Ascending aorta (tissue), 2 donors: ENCODE measurements at regions of chr3 and their contacts with region 1.

Region 1: GRCh38 chr3:112642912-112643506 is 2.1 kb upstream of the CCDC80 start:
- DNase-seq: peak; percentile 61 to 95
- H3K4me3 ChIP-seq: peak overlapping the region in 1 of 2 donors; percentile 21
- H3K27ac ChIP-seq: peak overlapping the region in 1 of 2 donors; percentile 83
- H3K4me1 ChIP-seq: peaks cover 3 to 15% of the 10 kb centered on the region in 2 donors
- H3K27me3 ChIP-seq: no peaks in the 10 kb centered on the region
- CTCF ChIP-seq: peak; percentile 83 to 90 (median 84)

Region 2: GRCh38 chr3:112338021-112338726 is 304.8 kb before region 1 on chr3:
- intact Hi-C with region 1: no loop called
- DNase-seq: no peak
- H3K4me3 ChIP-seq: peak overlapping the region in 1 of 2 donors; percentile 19
- H3K27ac ChIP-seq: peak overlapping the region; percentile 95
- H3K4me1 ChIP-seq: peaks cover 0 to 18% of the 10 kb centered on the region in 2 donors
- H3K27me3 ChIP-seq: no peaks in the 10 kb centered on the region
- CTCF ChIP-seq: no peak

Region 3: GRCh38 chr3:112582244-112582874 is 60.6 kb before region 1 on chr3:
- intact Hi-C with region 1: loop called (anchors 5 kb)
- DNase-seq: no peak
- H3K4me3 ChIP-seq: no peak overlapping the region
- H3K27ac ChIP-seq: no peak overlapping the region
- H3K4me1 ChIP-seq: no peaks in the 10 kb centered on the region
- H3K27me3 ChIP-seq: no peaks in the 10 kb centered on the region
- CTCF ChIP-seq: peak in 2 of 3 experiments; percentile 42 to 58

Region 4: GRCh38 chr3:112629425-112629824 is 13.6 kb before region 1 on chr3:
- intact Hi-C with region 1: no loop called
- DNase-seq: peak in 1 of 2 donors; percentile 80
- H3K4me3 ChIP-seq: no peak overlapping the region
- H3K27ac ChIP-seq: no peak overlapping the region
- H3K4me1 ChIP-seq: peaks cover 0 to 3% of the 10 kb centered on the region in 2 donors
- H3K27me3 ChIP-seq: no peaks in the 10 kb centered on the region
- CTCF ChIP-seq: no peak

Region 5: DNA sequence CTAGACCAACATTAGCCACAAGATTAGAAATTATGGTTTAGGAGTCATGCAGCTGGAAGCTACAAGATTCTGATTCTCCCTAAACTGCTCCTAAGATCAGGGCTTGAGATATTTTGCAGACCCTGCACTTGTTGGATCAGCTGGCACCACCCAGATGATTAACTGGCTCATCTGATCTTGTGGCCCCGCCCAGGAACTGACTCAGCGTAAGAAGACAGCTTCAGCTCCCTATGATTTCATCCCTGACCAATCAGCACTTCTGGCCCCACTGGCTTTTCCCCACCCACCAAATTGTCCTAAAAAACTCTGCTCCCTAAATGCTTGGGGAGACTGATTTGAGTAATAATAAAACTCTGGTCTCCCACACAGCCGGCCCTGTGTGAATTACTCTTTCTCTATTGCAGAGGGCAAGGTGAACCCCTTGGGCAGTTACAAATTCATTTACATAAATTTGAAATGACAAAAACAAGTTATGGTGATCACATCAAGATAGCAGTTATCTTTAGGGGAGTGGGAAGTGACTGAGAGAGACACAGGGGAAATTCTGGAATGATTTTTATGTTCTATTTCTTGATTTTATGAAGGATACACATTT is 127.1 kb after region 1 on chr3:
- intact Hi-C with region 1: no loop called
- DNase-seq: no peak
- H3K4me3 ChIP-seq: no peak overlapping the region
- H3K27ac ChIP-seq: no peak overlapping the region
- H3K4me1 ChIP-seq: no peaks in the 10 kb centered on the region
- H3K27me3 ChIP-seq: no peaks in the 10 kb centered on the region
- CTCF ChIP-seq: no peak

Region 6: DNA sequence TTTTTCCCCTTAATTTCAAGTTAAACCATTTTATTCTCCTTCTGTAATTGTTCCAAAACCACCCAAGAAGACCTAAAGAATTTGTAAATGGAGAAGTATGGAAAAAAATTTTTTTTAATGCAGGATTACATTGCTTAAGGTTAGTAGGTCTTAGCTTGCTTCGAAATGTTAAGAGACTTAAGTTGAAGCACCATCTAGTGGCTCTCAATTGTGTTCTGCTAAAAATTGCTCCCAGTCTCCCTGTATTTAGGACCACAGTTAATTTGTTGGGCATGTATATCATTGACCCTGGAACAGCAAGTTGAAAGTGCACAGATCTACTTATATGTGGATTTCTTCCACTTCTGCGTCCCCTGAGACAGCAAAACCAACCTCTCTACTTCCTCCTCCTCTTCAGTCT is 171.3 kb after region 1 on chr3:
- intact Hi-C with region 1: loop called (anchors 2 kb)
- DNase-seq: no peak
- H3K4me3 ChIP-seq: no peak overlapping the region
- H3K27ac ChIP-seq: no peak overlapping the region
- H3K4me1 ChIP-seq: peaks cover 0 to 8% of the 10 kb centered on the region in 2 donors
- H3K27me3 ChIP-seq: no peaks in the 10 kb centered on the region
- CTCF ChIP-seq: peak in 2 of 3 experiments; percentile 15 to 46

Region 7: DNA sequence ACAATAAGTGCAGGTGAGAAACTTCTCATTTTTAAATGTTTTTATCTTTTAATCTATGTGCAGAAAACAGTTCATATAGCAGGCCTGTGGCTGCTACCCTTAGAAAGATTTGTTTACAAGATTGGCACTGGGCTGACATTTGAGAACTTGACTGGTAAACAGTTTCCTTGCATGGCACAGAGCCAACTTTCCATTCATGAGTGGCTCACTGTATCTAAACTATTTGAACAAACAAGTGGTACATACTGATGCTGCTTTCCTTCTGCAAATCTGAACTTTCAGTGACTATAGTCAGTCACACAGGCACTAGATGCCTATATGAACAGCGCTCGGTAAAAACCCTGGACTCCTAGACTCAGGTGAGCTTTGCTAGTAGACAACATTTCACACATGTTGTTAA is 341.5 kb after region 1 on chr3:
- intact Hi-C with region 1: loop called (anchors 2 kb)
- DNase-seq: no peak
- H3K4me3 ChIP-seq: no peak overlapping the region
- H3K27ac ChIP-seq: no peak overlapping the region
- H3K4me1 ChIP-seq: no peaks in the 10 kb centered on the region
- H3K27me3 ChIP-seq: no peaks in the 10 kb centered on the region
- CTCF ChIP-seq: no peak